AG04449 (cell line): ENCODE measurements at regions of chr12 and their contacts with region 1.

Region 1: DNA sequence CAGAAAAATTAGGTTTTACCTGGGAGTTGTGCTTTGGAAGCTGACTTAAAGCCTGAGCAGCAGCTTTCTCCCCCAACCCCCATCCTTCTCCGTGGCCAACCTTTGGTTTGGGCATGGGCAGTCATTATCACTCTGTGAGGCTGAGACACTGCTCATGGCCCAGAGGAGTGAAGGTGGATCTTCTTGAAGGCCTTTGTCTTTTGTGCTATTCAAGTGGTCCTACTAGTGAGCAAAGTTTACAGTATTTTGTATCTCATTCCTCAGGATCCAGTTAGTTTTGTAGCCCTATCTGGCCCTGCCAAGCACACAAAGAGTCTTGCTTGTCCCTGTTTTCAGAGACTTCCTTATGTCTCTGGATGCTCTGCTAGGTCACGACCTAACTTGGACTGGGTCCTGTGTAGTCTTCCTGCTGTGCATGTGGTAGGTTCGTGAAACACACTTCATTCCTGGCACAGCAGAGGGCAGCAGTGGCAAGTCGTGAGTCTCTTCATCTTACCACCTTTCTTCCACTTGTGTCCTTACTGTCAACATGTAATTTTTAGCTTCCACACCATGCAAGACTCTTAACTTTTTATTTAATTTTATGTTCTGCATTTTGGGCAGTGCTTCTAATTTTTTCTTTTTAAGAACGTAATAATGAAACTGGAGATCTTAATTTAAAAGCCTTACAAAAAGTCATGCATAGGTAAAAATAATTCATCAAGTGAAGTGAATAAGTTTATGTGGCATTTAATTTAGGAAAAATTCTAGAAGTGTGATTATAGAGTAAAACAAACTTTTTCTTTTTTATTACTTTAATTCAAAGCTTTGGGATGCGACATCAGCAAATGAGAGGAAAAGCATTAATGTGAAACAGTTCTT is 53.7 kb downstream of the APAF1 start:
- DNase-seq: peak; percentile 4
- H3K4me3 ChIP-seq: no peak overlapping the region
- CTCF ChIP-seq: peak; percentile 74

Region 2: GRCh38 chr12:98319716-98320425 is 379.0 kb before region 1 on chr12:
- CTCF ChIA-PET with region 1: no interaction called
- POLR2A ChIA-PET with region 1: no interaction called
- DNase-seq: no peak
- H3K4me3 ChIP-seq: no peak overlapping the region
- CTCF ChIP-seq: no peak

Region 3: DNA sequence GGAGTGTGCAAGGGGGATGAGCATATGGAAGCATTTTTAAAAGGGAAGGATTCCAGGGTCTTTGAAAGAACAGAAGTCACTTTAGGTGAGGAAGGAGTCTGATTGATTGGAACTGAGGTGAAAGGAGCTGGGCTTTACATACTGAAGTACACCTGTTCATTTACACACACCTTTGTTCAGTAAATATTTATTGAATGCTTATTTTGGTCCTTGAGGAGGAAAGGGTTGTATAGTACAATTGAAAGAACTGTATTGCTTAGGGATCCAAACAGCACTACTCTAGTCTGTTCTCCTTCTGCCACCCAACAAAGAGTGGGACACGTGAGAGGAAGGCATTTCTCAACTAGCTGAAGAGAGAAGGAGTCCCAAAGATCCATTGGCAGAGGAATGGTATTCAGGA is 10.2 kb after region 1 on chr12:
- CTCF ChIA-PET with region 1: interaction called, 13 read pairs
- POLR2A ChIA-PET with region 1: no interaction called
- DNase-seq: no peak
- H3K4me3 ChIP-seq: no peak overlapping the region
- CTCF ChIP-seq: no peak

Region 4: DNA sequence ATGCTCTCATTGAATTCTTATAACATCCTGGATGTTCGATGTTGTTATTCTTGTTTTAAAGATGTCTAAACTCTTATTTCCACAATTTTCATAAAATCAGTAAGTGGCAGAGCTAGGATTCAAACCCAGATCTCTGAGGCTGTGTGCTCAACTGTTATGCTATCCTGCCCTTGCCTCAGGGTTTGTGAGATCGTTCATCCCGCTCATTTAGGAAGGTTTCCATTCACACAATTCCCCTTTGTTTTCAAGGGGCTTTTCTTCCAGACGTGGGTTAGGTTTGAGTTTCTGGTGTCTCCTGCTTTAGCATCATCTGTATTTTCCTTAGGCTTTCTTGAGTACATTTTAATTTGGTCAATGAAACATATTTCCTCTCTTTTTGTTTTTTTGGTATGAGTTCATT is 15.6 kb after region 1 on chr12:
- CTCF ChIA-PET with region 1: interaction called, 13 read pairs
- POLR2A ChIA-PET with region 1: no interaction called
- DNase-seq: no peak
- H3K4me3 ChIP-seq: no peak overlapping the region
- CTCF ChIP-seq: no peak

Region 5: DNA sequence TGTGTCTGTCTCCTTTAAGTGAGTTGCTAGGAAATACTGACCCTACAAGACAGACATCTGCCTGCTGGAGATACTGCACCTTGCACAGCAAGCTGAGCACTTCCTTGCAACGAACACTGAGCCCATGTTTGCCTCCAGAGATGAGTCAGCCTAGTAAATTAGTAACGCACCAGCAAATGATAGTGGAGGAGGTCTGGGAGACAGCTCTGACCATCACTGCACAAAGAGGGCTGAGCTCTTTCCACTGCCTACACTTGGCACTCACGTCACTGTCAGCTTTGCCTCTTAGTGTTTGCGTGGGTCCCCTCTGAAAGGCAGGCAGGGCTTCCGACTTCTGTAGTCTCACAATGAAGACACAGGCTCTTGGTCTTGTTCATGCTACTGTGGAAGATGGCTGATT is 55.3 kb after region 1 on chr12:
- CTCF ChIA-PET with region 1: no interaction called
- POLR2A ChIA-PET with region 1: no interaction called
- DNase-seq: peak; percentile 21
- H3K4me3 ChIP-seq: no peak overlapping the region
- CTCF ChIP-seq: no peak

Region 6: DNA sequence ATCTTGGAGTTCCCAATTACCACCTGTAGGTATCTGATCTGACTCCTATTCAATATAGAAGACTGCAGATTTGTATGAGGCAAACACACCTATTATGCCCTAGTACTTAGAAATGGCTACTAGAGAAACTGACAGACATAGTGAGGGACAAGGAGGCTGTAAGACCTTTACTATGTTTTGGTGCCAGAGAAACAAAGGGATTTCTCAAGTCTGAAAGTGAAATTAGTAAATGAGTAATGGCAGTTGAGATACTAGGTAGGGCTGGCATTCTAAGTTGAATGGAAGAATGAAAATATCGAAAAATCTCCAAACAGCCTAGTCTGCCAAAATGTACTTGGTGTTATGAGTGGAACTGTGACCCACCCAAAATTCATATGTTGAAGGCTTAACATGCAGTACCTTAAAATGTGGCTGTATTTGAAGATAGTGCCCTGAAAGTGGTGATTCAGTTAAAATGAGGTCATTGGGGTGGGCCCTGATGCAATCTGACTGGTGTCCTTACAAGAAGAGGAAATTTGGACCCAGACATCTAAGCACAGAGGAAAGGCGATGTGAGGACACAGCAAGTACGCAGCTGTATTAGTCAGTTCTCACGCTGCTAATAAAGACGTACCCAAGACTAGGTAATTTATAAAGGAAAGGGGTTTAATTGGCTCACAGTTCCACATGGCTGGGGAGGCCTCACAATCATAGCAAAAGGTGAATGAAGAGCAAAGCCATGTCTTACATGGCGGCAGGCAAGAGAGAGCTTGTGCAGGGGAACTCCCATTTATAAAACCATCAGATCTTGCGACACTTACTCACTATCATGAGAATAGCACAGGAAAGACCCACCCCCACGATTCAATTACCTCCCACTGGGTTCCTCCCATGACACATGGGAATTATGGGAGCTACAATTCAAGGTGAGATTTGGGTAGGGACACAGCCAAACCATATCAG is 73.2 kb after region 1 on chr12:
- CTCF ChIA-PET with region 1: no interaction called
- POLR2A ChIA-PET with region 1: no interaction called
- DNase-seq: no peak
- H3K4me3 ChIP-seq: no peak overlapping the region
- CTCF ChIP-seq: no peak